RWPE1 (cell line): ENCODE measurements at regions of chr10 and their contacts with region 1.

Region 1: GRCh38 chr10:96491299-96491698 is 22.4 kb downstream of the TLL2 start:
- DNase-seq: peak; percentile 64
- H3K27ac ChIP-seq: no peak overlapping the region
- CTCF ChIP-seq: peak; percentile 32

Region 2: DNA sequence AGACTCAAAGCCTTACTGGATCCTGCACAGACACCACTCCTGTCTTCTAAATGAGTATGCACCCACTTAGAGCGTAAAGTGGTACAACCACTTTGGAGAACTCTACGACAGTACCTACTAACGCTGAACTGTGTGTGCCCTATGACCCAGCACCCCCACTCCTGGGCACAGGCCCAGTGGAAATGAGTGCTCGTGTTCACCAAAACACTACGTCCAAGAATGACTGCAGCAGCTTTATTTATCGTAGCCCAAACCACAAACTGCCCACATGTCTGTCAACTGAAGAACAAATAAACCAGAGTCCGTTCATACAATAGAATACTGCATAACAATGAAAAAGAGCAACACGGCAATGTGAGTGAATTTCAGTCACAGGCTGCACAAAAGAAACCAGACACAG is 13.0 kb before region 1 on chr10:
- CTCF ChIA-PET with region 1: interaction called, 14 read pairs
- POLR2A ChIA-PET with region 1: no interaction called
- DNase-seq: no peak
- H3K27ac ChIP-seq: no peak overlapping the region
- CTCF ChIP-seq: no peak

Region 3: GRCh38 chr10:96501985-96502384 is 10.7 kb after region 1 on chr10:
- CTCF ChIA-PET with region 1: interaction called, 17 read pairs
- POLR2A ChIA-PET with region 1: no interaction called
- DNase-seq: peak; percentile 87
- H3K27ac ChIP-seq: peak overlapping the region; percentile 28
- CTCF ChIP-seq: no peak